ENCODE measurements at regions of chr19 and their contacts with region 1.

Region 1: DNA sequence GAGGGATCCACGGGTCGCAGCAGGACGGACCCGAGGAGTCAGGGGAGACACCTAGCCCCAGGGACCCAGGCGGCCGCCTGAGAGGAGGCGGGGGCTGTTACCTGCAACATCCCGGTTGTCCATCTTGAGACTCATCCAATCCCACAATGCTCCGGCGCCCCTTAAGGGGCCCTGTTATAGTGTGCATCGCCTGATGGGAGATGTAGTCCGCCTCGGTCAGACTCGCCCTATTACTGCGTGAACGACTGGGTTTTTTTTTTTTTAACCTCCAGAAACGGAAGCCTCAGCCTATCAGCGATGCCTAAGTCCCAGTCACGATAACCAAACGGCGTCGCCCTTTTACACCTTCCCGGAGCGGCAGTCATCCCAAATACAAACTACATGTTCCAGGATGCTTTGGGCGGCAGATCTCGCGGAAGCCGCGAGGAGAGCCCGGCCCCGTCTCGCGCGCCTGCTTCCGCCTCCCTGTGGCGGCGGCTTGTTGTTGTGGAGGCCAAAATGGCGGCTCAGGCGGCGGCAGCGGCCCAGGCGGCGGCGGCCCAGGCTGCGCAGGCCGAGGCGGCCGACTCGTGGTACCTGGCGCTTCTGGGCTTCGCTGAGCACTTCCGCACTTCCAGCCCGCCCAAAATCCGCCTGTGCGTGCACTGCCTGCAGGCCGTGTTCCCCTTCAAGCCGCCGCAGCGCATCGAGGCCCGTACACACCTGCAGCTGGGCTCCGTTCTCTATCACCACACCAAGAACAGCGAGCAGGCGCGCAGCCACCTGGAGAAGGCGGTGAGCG is at the starts of genes MAU2 and SUGP1:
- DNase-seq: peak; percentile 82
- ATAC-seq: peak; percentile 92
- H3K4me3 Mint-ChIP-seq: peak within 1 kb of the TSS; percentile 98
- H3K27ac Mint-ChIP-seq: peak within 1 kb of the TSS; percentile 100
- H3K4me1 Mint-ChIP-seq: peaks cover 42% of the 10 kb centered on the region
- H3K27me3 Mint-ChIP-seq: no peaks in the 10 kb centered on the region
- CTCF ChIP-seq: no peak
- total RNA-seq, gene MAU2: 107 and 126 TPM in 2 replicates
- total RNA-seq, gene SUGP1: 68.6 and 73.0 TPM in 2 replicates

Region 2: GRCh38 chr19:19033426-19034203 is 286.9 kb before region 1 on chr19 and contains the starts of genes ARMC6 and SUGP2:
- CTCF ChIA-PET with region 1: no interaction called
- POLR2A ChIA-PET with region 1: no interaction called
- intact Hi-C with region 1: loop called (anchors 1 kb)
- DNase-seq: peak; percentile 94
- ATAC-seq: peak; percentile 76
- H3K4me3 Mint-ChIP-seq: peak within 1 kb of the TSS; percentile 92
- H3K27ac Mint-ChIP-seq: peak within 1 kb of the TSS; percentile 91
- H3K4me1 Mint-ChIP-seq: peaks cover 31% of the 10 kb centered on the region
- H3K27me3 Mint-ChIP-seq: no peaks in the 10 kb centered on the region
- CTCF ChIP-seq: no peak
- total RNA-seq, gene ARMC6: 33.3 and 37.9 TPM in 2 replicates
- total RNA-seq, gene SUGP2: 121 and 122 TPM in 2 replicates

Region 3: DNA sequence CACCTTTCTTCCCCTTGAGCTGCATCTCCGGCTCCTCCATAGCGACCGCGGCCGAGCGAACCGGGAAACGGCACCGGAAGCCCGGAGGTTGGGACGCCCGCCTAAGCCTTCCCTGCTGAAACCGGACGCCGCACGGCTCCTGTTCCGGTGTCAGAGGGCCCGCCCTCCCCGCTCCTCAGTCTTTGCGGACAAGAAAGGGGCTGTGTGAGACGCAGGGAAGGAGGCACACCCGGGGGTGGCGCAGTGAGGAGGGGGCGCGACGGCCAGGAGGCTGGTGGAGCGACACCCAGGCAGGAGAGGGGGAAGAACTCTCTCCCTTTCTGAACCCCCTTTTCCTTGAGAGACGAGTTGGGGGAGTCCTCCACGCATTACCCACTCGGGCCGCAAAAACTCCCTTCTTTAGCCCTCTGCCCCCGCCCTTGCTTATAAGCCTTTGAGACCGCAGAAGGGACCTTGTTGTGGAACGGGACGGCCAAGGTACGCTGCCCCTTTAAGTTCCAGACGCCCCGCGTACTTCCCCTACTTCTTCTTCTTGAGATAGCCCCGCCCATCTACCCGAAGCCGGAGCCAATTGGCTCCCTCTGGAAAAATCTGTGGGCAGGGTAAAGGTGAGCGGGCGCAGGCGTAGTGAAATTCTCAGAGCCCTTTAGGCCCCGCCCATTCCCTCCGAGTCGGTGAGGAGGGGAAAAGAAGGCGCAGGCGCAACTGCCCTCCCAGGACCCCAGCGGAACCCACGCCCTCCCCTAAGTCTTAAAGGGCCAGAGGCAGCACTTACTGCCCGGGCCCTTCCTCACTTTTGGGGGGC is 128.3 kb before region 1 on chr19 and contains the starts of genes BORCS8 and RFXANK:
- CTCF ChIA-PET with region 1: no interaction called
- POLR2A ChIA-PET with region 1: interaction called, 4 read pairs
- intact Hi-C with region 1: loop called (anchors 1 kb)
- DNase-seq: peak; percentile 91
- ATAC-seq: peak; percentile 85
- H3K4me3 Mint-ChIP-seq: peak within 1 kb of the TSS; percentile 99
- H3K27ac Mint-ChIP-seq: peak within 1 kb of the TSS; percentile 99
- H3K4me1 Mint-ChIP-seq: peaks cover 49% of the 10 kb centered on the region
- H3K27me3 Mint-ChIP-seq: no peaks in the 10 kb centered on the region
- CTCF ChIP-seq: no peak
- total RNA-seq, gene BORCS8: 51.8 and 52.3 TPM in 2 replicates
- total RNA-seq, gene RFXANK: 95.4 and 96.9 TPM in 2 replicates

Region 4: GRCh38 chr19:19203012-19203856 is 117.3 kb before region 1 on chr19 and contains the start of gene NR2C2AP:
- CTCF ChIA-PET with region 1: no interaction called
- POLR2A ChIA-PET with region 1: no interaction called
- intact Hi-C with region 1: loop called (anchors 1 kb)
- DNase-seq: peak; percentile 87
- ATAC-seq: peak; percentile 92
- H3K4me3 Mint-ChIP-seq: peak within 1 kb of the TSS; percentile 94
- H3K27ac Mint-ChIP-seq: peak within 1 kb of the TSS; percentile 86
- H3K4me1 Mint-ChIP-seq: peaks cover 37% of the 10 kb centered on the region
- H3K27me3 Mint-ChIP-seq: peaks cover 2% of the 10 kb centered on the region
- CTCF ChIP-seq: no peak
- total RNA-seq, gene NR2C2AP: 37.1 and 39.2 TPM in 2 replicates

Region 5: DNA sequence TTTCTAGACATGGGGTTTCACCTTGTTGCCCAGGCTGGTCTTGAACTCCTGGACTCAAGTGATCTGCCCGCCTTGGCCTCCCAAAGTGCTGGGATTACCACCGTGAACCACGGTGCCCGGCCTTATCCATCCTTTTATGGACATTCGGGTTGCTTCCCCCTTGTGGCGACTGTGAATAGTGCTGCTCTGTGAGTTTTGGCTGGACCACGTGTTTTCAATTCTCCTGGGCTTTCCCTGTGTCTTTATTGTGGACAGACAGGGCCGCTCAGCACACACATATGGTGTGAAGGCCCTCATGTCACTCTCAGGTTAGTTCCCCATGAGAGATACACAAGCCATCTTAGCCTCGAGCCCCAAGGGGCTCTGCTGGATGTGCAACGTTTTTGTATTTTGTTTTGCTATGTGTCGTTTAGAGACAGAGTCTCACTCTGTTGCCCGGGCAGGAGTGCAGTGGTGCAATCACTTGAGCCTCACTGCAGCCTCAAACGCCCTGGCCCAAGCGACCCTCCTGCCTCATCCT is 40.6 kb after region 1 on chr19:
- CTCF ChIA-PET with region 1: no interaction called
- POLR2A ChIA-PET with region 1: no interaction called
- intact Hi-C with region 1: loop called (anchors 2 kb)
- DNase-seq: peak; percentile 54
- ATAC-seq: peak; percentile 68
- H3K4me3 Mint-ChIP-seq: peak overlapping the region; percentile 74
- H3K27ac Mint-ChIP-seq: peak overlapping the region; percentile 57
- H3K4me1 Mint-ChIP-seq: peaks cover 23% of the 10 kb centered on the region
- H3K27me3 Mint-ChIP-seq: no peaks in the 10 kb centered on the region
- CTCF ChIP-seq: peak; percentile 87

Region 6: DNA sequence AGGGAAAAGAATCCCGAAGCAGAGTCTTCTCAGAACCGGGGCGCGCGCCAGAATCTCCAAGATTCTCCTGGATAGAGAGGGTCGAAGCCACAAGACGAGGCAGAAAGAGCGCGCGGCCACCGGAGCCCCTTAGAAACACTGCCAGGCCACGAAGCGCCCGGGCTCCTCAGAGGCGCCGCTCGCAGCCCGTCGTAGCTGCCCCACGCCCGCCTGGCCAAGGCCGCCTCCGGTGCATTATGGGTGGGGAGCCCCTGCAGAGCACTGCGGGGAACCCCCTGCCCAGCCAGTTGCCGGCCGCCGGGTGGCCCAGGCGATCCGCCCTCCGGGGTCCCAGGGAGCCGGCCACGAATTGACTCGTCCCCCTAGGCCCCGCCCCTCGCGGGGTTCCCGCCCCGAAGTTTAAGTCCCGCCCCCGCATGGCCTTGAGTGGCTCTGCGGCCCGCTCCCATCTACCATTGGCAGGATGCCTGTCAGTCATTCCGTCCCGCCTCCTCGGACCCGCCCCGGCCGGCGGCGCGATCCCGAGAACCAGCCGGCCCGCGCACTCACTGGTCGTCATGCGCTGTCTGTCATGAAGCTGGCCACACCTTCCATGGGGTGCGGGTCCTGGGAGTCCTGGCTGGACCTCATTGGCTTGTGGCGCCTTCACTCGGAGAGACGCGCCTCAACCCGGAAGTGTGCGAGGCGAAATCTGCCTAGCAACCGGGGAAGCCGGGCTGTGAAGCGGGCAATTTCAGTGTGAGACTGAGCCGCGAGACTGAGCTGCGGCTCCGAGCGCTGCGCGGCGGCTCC is 64.8 kb after region 1 on chr19:
- CTCF ChIA-PET with region 1: no interaction called
- POLR2A ChIA-PET with region 1: no interaction called
- intact Hi-C with region 1: loop called (anchors 1 kb)
- DNase-seq: peak; percentile 98
- ATAC-seq: peak; percentile 89
- H3K4me3 Mint-ChIP-seq: peak overlapping the region; percentile 87
- H3K27ac Mint-ChIP-seq: peak overlapping the region; percentile 83
- H3K4me1 Mint-ChIP-seq: peaks cover 43% of the 10 kb centered on the region
- H3K27me3 Mint-ChIP-seq: no peaks in the 10 kb centered on the region
- CTCF ChIP-seq: no peak

Region 7: DNA sequence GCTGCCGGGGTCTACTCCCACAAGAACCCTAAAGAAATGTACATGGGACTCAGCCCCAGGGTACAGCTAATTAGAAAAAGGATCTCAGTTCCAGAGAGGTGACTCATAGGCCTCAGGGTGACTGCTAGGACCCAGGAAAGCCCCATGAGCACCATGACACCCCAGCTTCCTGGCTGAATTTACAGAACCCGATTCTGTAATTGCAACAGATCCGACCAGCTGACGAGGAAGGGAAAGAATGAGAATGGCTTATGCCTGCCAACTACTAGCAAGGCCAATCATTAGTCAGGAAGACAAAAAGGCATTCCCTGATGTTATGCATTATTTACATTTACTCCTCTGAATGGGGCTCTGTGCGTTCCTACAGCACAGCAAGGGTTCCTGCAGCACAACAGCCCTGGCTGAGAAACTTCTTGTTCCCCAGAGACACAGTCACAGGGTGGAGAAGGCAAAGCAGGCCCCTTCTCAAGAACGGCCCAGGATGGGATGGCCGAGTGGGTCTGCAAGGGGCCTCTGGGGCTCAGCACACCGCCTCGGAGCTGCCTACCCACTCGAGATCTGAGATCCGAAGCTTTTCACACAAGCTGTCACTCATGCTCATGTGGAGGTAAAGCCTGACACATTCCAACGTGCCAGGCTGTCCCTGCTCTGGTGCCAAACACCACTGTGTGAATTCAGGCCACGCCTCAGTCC is 270.7 kb after region 1 on chr19:
- CTCF ChIA-PET with region 1: no interaction called
- POLR2A ChIA-PET with region 1: no interaction called
- intact Hi-C with region 1: loop called (anchors 10 kb)
- DNase-seq: no peak
- ATAC-seq: peak; percentile 91
- H3K4me3 Mint-ChIP-seq: peak overlapping the region; percentile 70
- H3K27ac Mint-ChIP-seq: peak overlapping the region; percentile 92
- H3K4me1 Mint-ChIP-seq: peaks cover 41% of the 10 kb centered on the region
- H3K27me3 Mint-ChIP-seq: no peaks in the 10 kb centered on the region
- CTCF ChIP-seq: no peak

Measured in activated B cell treated with CpG ODN at 0.5 μM for 24 hours (primary cell).